Activated CD4-positive, alpha-beta T cell treated with anti-CD3 and anti-CD28 coated beads for 36 hours (primary cell): ENCODE measurements at regions of chrX and their contacts with region 1.

Region 1: DNA sequence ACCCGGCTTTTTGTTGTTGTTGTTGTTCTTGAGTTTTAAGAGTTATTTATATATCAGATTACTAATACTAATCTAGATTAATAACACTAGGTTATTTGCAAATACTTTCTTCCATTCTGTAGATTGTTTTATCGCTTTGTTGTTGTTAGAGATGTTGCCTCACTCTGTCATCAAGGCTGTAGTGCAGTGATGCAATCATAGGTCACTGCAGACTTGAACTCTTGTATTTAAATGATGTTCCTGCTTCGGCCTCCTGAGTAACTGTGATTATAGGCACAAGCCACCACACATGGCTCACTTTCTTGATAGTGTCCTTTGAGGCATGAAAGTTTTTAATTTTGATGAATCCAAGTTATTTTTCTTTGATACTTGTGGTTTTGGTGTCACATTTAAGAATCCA is 129.0 kb downstream of the VSIG4 start:
- DNase-seq: no peak
- ATAC-seq: no peak
- H3K4me3 Mint-ChIP-seq: no peak overlapping the region
- H3K27ac Mint-ChIP-seq: no peak overlapping the region
- H3K4me1 Mint-ChIP-seq: no peaks in the 10 kb centered on the region
- H3K27me3 Mint-ChIP-seq: no peaks in the 10 kb centered on the region

Region 2: GRCh38 chrX:65769564-65770292 is 141.2 kb before region 1 on chrX:
- CTCF ChIA-PET with region 1: no interaction called
- POLR2A ChIA-PET with region 1: no interaction called
- intact Hi-C with region 1: loop called in 1 of 2 experiments (anchors 10 kb)
- DNase-seq: no peak
- ATAC-seq: no peak
- H3K4me3 Mint-ChIP-seq: no peak overlapping the region
- H3K27ac Mint-ChIP-seq: no peak overlapping the region
- H3K4me1 Mint-ChIP-seq: no peaks in the 10 kb centered on the region
- H3K27me3 Mint-ChIP-seq: no peaks in the 10 kb centered on the region

Region 3: GRCh38 chrX:66098162-66098561 is 187.3 kb after region 1 on chrX:
- CTCF ChIA-PET with region 1: no interaction called
- POLR2A ChIA-PET with region 1: no interaction called
- intact Hi-C with region 1: no loop called
- DNase-seq: no peak
- ATAC-seq: no peak
- H3K4me3 Mint-ChIP-seq: no peak overlapping the region
- H3K27ac Mint-ChIP-seq: no peak overlapping the region
- H3K4me1 Mint-ChIP-seq: no peaks in the 10 kb centered on the region
- H3K27me3 Mint-ChIP-seq: no peaks in the 10 kb centered on the region